Activated B cell treated with CpG ODN at 0.5 μM for 24 hours (primary cell): ENCODE measurements at regions of chr16 and their contacts with region 1.

Region 1: DNA sequence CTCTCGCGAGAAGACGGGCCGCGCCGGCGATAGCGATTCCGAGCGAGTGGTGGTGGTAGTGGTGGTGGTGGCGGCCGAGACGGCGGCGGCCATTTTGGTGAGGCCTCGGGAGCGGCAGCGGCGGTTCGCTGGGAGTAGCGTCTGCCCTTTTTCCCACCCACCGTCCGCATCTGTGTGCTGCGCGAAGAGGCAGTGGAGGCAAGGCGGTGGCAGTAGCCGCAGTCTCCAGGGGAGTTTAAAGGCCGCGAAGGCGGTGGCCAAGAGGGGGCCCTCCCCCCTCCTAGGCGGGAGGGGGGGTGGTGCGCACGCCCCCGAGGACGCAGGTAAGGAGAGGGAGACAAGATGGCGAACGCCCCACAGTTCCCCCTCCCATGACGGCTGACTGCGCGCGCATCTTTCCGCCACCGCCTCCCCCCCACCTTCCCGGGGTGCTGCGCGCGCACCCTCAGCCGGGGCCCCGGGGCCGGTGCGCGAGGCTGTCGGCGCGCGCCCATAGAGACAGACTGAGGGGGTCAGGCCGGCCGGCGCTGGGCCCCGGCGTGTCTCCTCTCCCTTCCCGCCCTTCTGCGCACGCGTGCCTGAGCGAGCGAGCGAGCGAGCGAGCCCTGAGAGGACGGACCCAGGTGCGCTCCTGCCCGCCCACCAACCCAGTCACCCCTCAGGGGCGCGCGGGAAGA is 694 bp upstream of the SRCAP start:
- DNase-seq: peak; percentile 96
- ATAC-seq: peak; percentile 75
- H3K4me3 Mint-ChIP-seq: peak overlapping the region; percentile 97
- H3K27ac Mint-ChIP-seq: peak overlapping the region; percentile 100
- H3K4me1 Mint-ChIP-seq: peaks cover 30% of the 10 kb centered on the region
- H3K27me3 Mint-ChIP-seq: no peaks in the 10 kb centered on the region
- CTCF ChIP-seq: no peak

Region 2: DNA sequence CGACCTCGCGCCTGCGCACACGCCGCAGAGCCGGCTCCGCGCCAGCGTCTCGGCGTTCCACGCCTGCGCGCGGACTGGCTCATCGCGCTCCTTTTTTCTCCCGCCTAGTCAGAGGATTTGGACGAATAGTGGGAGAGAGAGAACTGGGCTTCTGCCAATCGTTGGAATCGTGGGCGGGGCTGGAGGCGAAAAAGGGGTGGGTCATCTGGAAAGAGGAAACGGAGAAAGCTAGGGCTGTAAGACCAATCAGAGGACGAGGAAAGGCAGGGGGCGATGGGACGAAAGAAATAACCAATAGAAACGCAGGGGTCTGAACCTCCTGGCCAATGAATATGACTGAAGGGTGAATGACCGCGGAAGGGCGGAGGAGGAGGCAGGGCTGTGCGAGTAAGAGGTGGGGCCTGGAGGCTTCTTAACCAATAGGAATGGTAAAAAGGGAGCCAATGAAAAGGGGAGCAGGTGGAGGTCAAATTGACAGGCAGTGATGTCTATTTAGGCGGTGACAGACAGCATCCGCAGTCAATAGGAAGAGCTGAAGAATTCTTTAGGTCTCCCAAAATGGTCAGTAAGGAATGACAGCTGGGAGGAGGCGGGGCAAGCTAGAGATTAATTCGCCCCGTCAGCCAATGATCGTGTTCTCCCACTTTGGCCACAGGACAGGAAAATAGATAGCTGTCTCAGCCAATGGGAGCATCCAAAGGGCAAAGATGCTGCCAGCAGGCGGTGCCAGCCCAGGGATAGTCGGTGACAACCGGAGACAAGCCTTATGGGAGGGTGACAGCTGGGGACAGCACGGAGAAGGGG is 327.6 kb before region 1 on chr16 and contains the start of gene TBC1D10B:
- CTCF ChIA-PET with region 1: no interaction called
- POLR2A ChIA-PET with region 1: no interaction called
- intact Hi-C with region 1: loop called (anchors 2 kb)
- DNase-seq: peak; percentile 92
- ATAC-seq: peak; percentile 83
- H3K4me3 Mint-ChIP-seq: peak within 1 kb of the TSS; percentile 87
- H3K27ac Mint-ChIP-seq: peak within 1 kb of the TSS; percentile 86
- H3K4me1 Mint-ChIP-seq: peaks cover 52% of the 10 kb centered on the region
- H3K27me3 Mint-ChIP-seq: no peaks in the 10 kb centered on the region
- CTCF ChIP-seq: no peak
- total RNA-seq, gene TBC1D10B: 46.3 and 50.2 TPM in 2 replicates

Region 3: GRCh38 chr16:30557957-30558788 is 140.1 kb before region 1 on chr16 and contains the start of gene ZNF764:
- CTCF ChIA-PET with region 1: no interaction called
- POLR2A ChIA-PET with region 1: interaction called, 5 read pairs
- intact Hi-C with region 1: loop called (anchors 1 kb)
- DNase-seq: peak; percentile 91
- ATAC-seq: peak; percentile 93
- H3K4me3 Mint-ChIP-seq: peak within 1 kb of the TSS; percentile 83
- H3K27ac Mint-ChIP-seq: peak within 1 kb of the TSS; percentile 84
- H3K4me1 Mint-ChIP-seq: peaks cover 43% of the 10 kb centered on the region
- H3K27me3 Mint-ChIP-seq: no peaks in the 10 kb centered on the region
- CTCF ChIP-seq: no peak
- total RNA-seq, gene ZNF764: 16.1 and 19.2 TPM in 2 replicates

Region 4: GRCh38 chr16:30650369-30651123 is 47.7 kb before region 1 on chr16 and contains the start of gene PRR14:
- CTCF ChIA-PET with region 1: interaction called, 13 read pairs
- POLR2A ChIA-PET with region 1: interaction called, 19 read pairs
- intact Hi-C with region 1: loop called (anchors 1 kb)
- DNase-seq: peak; percentile 90
- ATAC-seq: peak; percentile 72
- H3K4me3 Mint-ChIP-seq: peak within 1 kb of the TSS; percentile 96
- H3K27ac Mint-ChIP-seq: peak within 1 kb of the TSS; percentile 95
- H3K4me1 Mint-ChIP-seq: peaks cover 24% of the 10 kb centered on the region
- H3K27me3 Mint-ChIP-seq: no peaks in the 10 kb centered on the region
- CTCF ChIP-seq: no peak
- total RNA-seq, gene PRR14: 63.5 and 77.9 TPM in 2 replicates

Region 5: GRCh38 chr16:30761928-30762810 is 63.9 kb after region 1 on chr16 and contains the starts of genes CFAP119 and RNF40:
- CTCF ChIA-PET with region 1: no interaction called
- POLR2A ChIA-PET with region 1: interaction called, 5 read pairs
- intact Hi-C with region 1: loop called (anchors 1 kb)
- DNase-seq: peak; percentile 94
- ATAC-seq: peak; percentile 89
- H3K4me3 Mint-ChIP-seq: peak within 1 kb of the TSS; percentile 93
- H3K27ac Mint-ChIP-seq: peak within 1 kb of the TSS; percentile 87
- H3K4me1 Mint-ChIP-seq: peaks cover 42% of the 10 kb centered on the region
- H3K27me3 Mint-ChIP-seq: no peaks in the 10 kb centered on the region
- CTCF ChIP-seq: no peak
- total RNA-seq, gene CFAP119: 6.2 and 8.8 TPM in 2 replicates
- total RNA-seq, gene RNF40: 99.6 and 117 TPM in 2 replicates

Region 6: DNA sequence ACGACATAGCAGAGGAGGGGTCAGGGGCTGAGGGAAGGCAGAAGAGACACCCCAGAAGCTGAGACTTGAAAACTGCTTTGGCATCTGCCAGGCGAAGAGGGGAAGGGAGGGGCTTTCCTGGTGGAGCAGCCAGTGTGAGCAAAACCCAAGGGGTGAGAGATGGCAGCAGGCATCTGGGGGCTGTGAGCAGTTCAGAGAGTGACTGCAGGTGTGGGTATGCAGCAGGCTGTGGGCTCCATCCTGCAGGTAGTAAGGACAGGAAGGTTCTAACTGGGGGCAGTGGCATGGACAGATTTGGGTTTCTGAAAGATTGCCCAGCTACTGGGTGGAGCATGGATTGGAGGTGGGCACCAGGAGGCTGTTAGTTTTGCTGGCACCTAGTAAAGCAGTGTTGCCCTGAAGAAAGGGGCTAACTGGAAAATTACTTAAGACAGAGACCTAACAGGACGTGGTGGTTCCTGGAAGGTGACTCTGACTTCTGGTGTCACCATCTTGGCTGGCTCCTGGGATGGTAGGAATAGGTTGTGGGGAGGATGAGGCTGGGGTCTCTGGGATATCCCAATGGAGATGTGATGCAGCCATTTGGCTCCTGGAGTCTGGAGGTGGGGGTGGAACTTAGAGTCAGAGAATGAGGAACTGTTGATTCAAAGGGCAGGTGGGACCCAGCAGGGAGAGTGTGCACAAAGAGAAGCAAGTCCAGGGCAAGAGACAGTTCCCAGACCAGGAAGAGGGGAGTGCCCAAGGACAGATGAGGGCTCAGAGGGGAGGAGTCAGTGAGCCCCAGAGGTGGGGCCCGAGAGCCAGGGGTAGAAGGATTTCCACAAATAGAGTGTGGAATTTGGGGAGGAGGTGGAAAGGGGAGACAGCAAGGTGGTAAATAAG is 184.4 kb after region 1 on chr16:
- CTCF ChIA-PET with region 1: no interaction called
- POLR2A ChIA-PET with region 1: no interaction called
- intact Hi-C with region 1: no loop called
- DNase-seq: no peak
- ATAC-seq: no peak
- H3K4me3 Mint-ChIP-seq: no peak overlapping the region
- H3K27ac Mint-ChIP-seq: peak overlapping the region; percentile 9
- H3K4me1 Mint-ChIP-seq: peaks cover 30% of the 10 kb centered on the region
- H3K27me3 Mint-ChIP-seq: no peaks in the 10 kb centered on the region
- CTCF ChIP-seq: no peak

Region 7: DNA sequence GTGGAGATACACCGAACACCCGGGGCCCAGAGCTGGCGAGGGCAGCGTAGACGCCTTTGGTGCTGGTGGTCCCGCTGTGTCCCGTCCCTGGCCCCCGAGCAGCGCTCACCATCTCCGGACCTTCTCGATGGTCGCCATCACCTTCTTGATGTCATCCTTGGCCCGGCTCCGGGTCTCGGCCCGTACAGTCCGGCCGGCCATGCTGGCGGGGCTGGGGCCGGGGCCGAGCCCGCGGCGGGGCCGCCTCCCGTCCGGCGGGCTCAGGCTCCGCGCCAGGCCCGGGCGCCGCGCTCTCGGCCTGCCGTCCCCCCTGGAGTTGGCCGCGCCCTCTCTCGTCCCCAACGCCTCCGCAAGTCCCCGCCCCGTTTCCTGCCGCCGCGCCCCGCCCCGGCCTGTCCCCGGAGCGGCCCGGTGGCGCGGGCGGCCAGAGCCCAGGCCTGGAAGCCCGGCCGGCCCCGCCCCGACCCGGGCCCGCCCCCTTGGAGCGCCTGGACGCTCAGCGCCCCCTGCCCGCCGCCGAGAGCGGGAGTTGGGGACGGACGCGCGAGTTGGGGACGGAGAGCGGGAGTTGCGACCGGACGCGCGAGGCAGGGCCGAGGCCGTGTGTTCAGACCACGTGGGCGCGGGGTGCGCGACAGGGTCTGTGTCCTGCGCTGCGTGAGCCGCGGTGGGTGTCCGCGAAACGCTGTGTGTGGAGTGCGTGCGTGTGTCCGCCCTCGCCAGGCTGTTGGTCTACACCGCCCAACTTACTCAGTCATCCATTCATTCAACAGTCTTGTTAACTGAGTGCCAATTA is 195.7 kb after region 1 on chr16 and contains the start of gene BCL7C:
- CTCF ChIA-PET with region 1: no interaction called
- POLR2A ChIA-PET with region 1: no interaction called
- intact Hi-C with region 1: loop called (anchors 1 kb)
- DNase-seq: peak; percentile 86
- ATAC-seq: peak; percentile 76
- H3K4me3 Mint-ChIP-seq: peak within 1 kb of the TSS; percentile 84
- H3K27ac Mint-ChIP-seq: peak within 1 kb of the TSS; percentile 88
- H3K4me1 Mint-ChIP-seq: peaks cover 48% of the 10 kb centered on the region
- H3K27me3 Mint-ChIP-seq: no peaks in the 10 kb centered on the region
- CTCF ChIP-seq: no peak
- total RNA-seq, gene BCL7C: 32.2 and 35.7 TPM in 2 replicates